Head of caudate nucleus (tissue), 42 donors: ENCODE measurements at regions of chr1 and their contacts with region 1.

Region 1: GRCh38 chr1:45750298-45751038 is at the start of gene IPP:
- DNase-seq: peak; percentile 84 to 98 (median 94)

Region 2: DNA sequence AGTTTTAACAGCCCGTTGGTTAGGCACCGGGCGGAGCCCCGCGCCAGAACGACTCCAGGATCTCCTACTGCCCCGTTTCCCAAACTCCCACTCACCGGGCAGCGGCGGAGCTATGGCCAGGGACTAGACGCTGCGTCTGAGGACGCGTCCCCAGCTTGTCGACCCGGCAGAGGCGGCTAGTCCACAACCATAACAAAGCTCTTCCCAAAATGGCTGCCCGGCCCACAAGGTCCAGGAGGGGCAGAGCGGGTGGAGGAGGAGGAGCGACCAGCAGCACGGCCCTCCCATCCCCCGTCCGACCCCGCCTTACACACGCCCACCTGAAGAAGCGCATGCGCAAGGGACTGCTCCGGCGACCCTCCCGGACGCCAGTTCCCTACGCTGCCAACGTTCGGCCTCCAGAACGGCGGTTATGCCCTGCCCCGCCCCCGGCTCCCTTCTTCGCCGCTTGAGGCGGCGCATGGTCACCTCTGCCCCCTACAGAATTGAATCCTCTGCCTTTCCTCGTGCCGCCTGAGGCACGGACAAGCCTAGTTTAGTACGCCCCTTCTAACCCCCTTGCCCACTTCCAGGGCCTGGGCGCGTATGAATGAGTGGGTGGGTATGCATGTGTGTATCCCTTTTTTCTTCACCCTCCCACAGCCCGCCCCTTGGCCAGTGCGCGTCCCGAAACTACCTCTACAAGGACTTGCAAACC is 64.0 kb before region 1 on chr1 and contains the start of gene GPBP1L1:
- intact Hi-C with region 1: loop called (anchors 1 kb)
- DNase-seq: peak; percentile 93 to 99 (median 98)

Region 3: DNA sequence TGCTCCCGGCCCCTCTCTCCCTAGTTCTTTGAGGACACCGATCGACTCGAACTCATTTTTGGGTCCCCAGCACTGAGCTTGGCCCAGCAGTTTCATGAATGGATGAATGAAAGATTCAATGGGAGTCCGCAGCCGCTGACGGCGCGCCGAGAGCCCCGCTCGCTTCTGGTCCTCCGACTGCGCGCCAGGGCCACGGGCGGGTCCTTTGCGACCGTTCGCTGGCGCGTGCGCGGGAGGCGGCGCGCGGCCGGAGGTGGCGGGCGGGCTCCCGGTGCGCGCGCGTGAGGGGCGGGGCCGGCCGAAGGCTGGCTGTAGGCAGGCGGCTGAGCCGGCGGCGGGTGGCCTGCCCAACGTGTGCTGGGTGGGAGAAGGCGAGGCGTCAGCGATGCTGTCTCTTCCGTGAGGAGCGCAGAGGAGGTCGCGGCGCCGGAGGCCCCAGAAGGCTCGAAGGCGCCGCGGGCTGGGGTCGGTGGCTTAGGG is 52.9 kb after region 1 on chr1 and contains the start of gene MAST2:
- intact Hi-C with region 1: loop called (anchors 2 kb)
- DNase-seq: peak; percentile 63 to 94 (median 87)